T-cell (primary cell): ENCODE measurements at regions of chr7 and their contacts with region 1.

Region 1: GRCh38 chr7:44973610-44974401 is 5.0 kb downstream of the MYO1G start:
- DNase-seq: peak in 34 of 35 experiments; percentile 33 to 72 (median 58)
- ATAC-seq: peak; percentile 22 to 43 (median 30)
- H3K4me3 ChIP-seq: no peak overlapping the region
- H3K4me3 Mint-ChIP-seq: no peak overlapping the region
- H3K27ac ChIP-seq: no peak overlapping the region
- H3K27ac Mint-ChIP-seq: peak overlapping the region; percentile 43 to 96
- H3K4me1 ChIP-seq: peaks cover 12 to 61% of the 10 kb centered on the region in 2 experiments
- H3K4me1 Mint-ChIP-seq: peaks cover 50 to 53% (median 51%) of the 10 kb centered on the region in 3 donors
- H3K27me3 ChIP-seq: no peaks in the 10 kb centered on the region
- H3K27me3 Mint-ChIP-seq: no peaks in the 10 kb centered on the region

Region 2: DNA sequence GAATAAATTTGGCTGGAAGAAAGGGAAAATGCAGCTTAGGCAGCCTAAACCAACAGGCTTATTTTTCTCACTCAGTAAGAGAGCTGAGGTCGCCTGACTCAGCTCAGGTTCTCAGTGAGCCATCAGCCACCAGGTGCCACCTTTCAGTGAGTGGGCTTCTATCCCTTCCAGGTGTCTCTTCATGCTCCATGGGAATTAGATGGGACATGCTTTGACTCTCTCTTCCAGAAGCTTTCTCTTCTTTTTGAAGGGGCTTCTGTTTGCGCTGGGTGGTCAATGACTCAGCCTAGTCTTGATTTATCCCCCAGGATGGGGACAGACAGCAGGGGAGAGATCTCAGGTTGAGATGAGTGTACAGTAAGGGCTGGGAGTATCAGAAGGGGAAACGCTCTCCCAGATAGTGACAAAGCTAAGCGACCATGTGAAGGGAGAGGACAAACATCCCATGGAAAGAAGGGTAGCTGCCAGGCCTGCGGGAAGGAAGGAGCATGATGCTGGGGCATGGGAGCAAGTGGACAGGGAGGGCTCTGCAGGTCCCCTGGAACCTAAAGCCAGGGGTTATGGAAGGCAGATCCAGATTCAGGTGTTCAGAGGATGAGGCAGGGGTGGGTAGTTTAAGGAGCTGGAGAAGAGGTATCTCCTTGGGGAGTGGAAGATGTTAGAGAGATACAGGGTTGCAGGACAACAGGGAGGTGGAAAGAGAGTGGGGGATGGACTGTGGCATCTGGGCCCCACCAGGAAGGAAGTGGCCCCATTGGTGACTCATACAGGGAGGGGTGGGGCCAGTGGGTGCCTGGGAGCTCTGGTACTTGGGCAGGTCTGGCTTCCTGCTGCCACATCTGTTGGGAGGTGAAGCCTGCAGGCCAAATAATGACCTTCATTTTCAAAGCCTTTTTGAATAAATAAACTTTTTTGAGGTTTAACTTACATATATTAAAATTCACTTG is 334.9 kb before region 1 on chr7:
- CTCF ChIA-PET with region 1: no interaction called
- POLR2A ChIA-PET with region 1: interaction called in 1 of 2 experiments, 18 read pairs
- DNase-seq: peak; percentile 56 to 83 (median 70)
- ATAC-seq: peak; percentile 66 to 89 (median 86)
- H3K4me3 ChIP-seq: no peak overlapping the region
- H3K4me3 Mint-ChIP-seq: peak overlapping the region; percentile 66 to 80 (median 69)
- H3K27ac ChIP-seq: peak overlapping the region; percentile 99
- H3K27ac Mint-ChIP-seq: peak overlapping the region; percentile 98 to 100
- H3K4me1 ChIP-seq: peaks cover 26 to 85% of the 10 kb centered on the region in 2 experiments
- H3K4me1 Mint-ChIP-seq: peaks cover 59 to 85% (median 82%) of the 10 kb centered on the region in 3 donors
- H3K27me3 ChIP-seq: no peaks in the 10 kb centered on the region
- H3K27me3 Mint-ChIP-seq: no peaks in the 10 kb centered on the region

Region 3: DNA sequence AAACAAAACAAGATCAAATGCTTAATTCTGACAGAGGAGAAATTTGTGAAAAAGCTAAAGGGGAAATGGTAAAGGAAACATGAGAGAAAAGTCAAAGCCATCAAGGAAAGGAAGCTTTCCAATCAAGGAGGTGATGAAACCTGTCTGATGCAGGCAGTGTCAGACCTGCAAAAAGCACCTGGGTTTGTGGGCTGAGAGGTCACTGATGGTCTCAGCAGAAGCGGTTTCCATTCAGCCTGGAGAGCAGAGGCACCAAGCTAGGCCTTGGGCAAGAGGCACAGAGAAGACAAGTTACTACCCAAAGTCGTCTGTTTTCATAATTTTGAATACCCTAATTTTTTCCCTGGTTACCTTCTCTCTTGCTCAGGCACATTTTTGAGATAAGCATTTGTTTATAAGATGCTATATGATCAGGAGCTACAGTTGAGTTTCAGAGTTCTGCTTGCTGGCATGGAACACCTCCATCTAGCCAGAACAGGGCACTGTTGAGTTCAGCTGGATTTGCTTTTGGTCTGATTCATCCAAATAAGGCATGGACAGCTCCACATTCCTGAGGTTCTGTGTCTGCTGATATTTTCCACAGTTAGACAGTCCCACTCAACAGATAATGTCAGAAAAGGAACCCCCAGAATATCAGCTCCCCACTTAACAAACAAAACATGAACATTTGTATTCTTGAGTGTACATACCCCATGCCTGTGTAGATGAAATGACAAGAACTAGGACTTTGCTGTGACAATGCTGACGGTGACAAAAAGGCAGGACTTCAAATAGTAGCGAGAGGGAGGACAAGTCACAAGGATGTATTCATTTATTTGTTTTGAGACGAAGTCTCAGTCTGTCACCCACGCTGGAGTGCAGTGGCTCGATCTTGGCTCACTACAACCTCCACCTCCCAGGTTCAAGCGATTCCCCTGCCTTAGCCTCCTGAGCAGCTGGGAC is 182.3 kb before region 1 on chr7:
- CTCF ChIA-PET with region 1: no interaction called
- POLR2A ChIA-PET with region 1: no interaction called
- DNase-seq: no peak
- ATAC-seq: no peak
- H3K4me3 ChIP-seq: no peak overlapping the region
- H3K4me3 Mint-ChIP-seq: no peak overlapping the region
- H3K27ac ChIP-seq: no peak overlapping the region
- H3K27ac Mint-ChIP-seq: no peak overlapping the region
- H3K4me1 ChIP-seq: peaks cover 2 to 14% of the 10 kb centered on the region in 2 experiments
- H3K4me1 Mint-ChIP-seq: peaks cover 0 to 5% (median 4%) of the 10 kb centered on the region in 3 donors
- H3K27me3 ChIP-seq: no peaks in the 10 kb centered on the region
- H3K27me3 Mint-ChIP-seq: no peaks in the 10 kb centered on the region

Region 4: DNA sequence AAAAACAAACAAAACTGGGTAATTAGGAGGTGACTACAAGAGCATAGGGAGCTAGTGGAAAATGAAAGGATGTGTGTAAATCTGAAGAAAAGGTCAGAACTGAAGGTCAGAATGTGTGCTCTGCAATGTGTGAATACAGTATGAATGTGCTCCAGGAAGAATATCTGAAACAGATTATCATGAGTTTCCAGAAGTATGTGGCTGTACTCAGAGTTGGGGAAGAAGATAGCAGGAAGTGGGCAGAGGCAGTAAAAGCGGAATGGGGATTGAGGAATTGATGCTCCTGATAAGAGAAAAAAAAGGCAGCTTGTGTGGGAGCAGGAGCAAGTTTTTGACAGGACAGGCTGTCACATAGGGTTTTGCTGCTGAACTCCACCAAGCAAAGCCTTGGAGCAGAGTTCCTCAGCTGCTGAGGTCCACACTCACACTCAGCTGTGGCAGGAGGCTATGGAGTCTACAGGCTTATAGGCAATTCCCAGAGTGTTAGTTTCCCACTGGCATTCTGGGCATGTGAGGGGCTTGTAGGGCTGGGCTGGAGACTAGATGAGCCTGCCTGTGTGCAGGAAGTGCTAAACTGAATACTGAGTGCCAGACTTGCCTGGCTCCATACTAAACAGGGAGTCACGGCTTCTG is 148.8 kb before region 1 on chr7:
- CTCF ChIA-PET with region 1: no interaction called
- POLR2A ChIA-PET with region 1: no interaction called
- DNase-seq: no peak
- ATAC-seq: peak in 1 of 4 experiments; percentile 17
- H3K4me3 ChIP-seq: no peak overlapping the region
- H3K4me3 Mint-ChIP-seq: no peak overlapping the region
- H3K27ac ChIP-seq: peak overlapping the region; percentile 20
- H3K27ac Mint-ChIP-seq: peak overlapping the region; percentile 47 to 53
- H3K4me1 ChIP-seq: no peaks in the 10 kb centered on the region
- H3K4me1 Mint-ChIP-seq: peaks cover 8 to 9% (median 8%) of the 10 kb centered on the region in 3 donors
- H3K27me3 ChIP-seq: no peaks in the 10 kb centered on the region
- H3K27me3 Mint-ChIP-seq: no peaks in the 10 kb centered on the region

Region 5: DNA sequence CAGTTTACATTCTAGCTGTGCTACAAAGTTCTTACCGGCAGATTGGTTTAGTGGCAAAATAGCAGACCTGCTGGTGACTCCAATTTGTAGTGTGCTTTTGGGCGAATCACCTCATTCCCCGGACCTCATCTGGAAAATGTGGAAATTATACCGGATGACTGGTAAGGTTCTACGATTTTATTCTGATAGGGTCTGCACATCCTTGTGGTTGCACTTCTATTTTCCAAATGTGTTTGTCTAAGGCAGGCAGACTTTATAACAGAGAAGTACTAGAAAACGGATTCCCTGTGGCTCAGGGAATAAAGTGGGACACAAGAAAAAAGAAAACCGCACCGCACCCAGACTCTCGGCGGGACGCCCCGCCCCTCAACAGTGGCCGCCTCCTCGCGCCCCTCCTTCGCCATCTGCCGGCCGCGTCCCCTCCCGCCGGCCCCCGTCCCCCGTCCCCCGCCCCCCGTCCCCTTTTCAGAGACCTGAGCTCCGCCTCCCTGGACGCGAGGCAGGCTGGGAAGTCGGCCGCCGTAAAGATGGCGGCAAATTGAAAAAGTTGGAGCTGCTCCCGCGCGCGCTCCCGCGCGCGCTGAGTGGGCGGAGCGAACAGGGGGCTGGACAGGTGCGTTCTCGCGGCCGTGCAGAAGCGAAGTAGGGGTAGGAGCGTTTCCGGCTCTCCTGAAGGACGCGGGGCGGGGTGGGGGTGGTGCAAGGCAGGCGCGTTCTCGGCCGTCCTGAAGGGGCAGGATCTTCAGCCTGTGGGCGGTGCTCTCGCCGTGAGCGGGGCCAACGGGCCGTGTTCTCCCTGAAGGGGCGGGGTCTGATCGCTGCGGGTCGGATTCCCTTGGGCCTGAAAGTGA is 25.7 kb after region 1 on chr7:
- CTCF ChIA-PET with region 1: interaction called, 19 to 36 read pairs
- POLR2A ChIA-PET with region 1: interaction called, 8 to 12 read pairs
- DNase-seq: peak; percentile 96 to 99 (median 98)
- ATAC-seq: peak; percentile 84 to 89 (median 86)
- H3K4me3 ChIP-seq: peak overlapping the region; percentile 60 to 79
- H3K4me3 Mint-ChIP-seq: peak overlapping the region; percentile 85 to 97 (median 95)
- H3K27ac ChIP-seq: peak overlapping the region; percentile 50
- H3K27ac Mint-ChIP-seq: peak overlapping the region; percentile 95 to 99
- H3K4me1 ChIP-seq: peaks cover 20 to 46% of the 10 kb centered on the region in 2 experiments
- H3K4me1 Mint-ChIP-seq: peaks cover 53 to 60% (median 54%) of the 10 kb centered on the region in 3 donors
- H3K27me3 ChIP-seq: no peaks in the 10 kb centered on the region
- H3K27me3 Mint-ChIP-seq: no peaks in the 10 kb centered on the region

Region 6: DNA sequence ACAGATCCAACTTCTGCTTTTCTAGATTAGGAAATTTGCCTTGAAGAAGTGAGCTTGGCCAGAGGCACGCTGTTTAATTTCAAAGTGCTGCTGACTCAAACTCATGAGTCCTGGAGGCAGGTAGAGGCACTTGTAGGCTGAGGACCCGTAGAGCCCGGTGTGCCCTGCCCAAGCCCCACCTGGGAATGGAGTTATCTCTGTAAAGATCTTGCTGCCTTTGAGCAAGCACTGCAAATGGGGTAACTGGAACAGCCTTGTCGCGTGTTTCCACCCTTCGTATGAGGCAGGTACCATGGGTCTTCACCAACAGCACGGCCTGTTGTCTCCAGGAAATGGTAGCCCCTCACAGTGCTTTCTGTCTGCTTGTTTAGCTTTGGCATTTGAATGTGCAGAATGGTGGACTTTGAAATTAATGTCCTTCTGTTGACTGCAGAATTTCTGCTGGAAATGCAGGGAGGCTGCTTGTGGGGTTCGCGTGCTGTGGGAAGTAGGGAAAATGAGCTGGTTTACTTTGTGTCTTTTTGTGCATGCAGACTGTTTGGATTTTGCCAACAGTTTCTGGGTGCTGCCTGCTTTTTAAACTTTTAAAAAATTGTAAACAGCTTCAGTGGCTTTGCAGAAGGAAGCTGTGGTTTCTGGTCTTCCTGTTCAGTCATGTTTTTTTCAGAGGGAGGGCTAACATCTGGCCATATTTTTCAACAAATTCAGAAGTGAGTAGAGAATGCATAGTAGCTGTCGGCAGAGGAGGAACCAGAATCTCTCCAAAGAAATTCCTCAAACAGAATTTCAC is 53.4 kb after region 1 on chr7:
- CTCF ChIA-PET with region 1: interaction called, 7 to 16 read pairs
- POLR2A ChIA-PET with region 1: interaction called, 3 read pairs
- DNase-seq: peak in 29 of 35 experiments; percentile 4 to 67 (median 23)
- ATAC-seq: peak; percentile 69 to 79 (median 76)
- H3K4me3 ChIP-seq: peak overlapping the region; percentile 89 to 96
- H3K4me3 Mint-ChIP-seq: peak overlapping the region; percentile 84 to 91 (median 90)
- H3K27ac ChIP-seq: peak overlapping the region; percentile 71
- H3K27ac Mint-ChIP-seq: peak overlapping the region; percentile 88 to 93
- H3K4me1 ChIP-seq: peaks cover 35 to 57% of the 10 kb centered on the region in 2 experiments
- H3K4me1 Mint-ChIP-seq: peaks cover 60 to 77% (median 67%) of the 10 kb centered on the region in 3 donors
- H3K27me3 ChIP-seq: no peaks in the 10 kb centered on the region
- H3K27me3 Mint-ChIP-seq: no peaks in the 10 kb centered on the region

Region 7: GRCh38 chr7:45035893-45036292 is 62.1 kb after region 1 on chr7:
- CTCF ChIA-PET with region 1: interaction called, 8 to 14 read pairs
- POLR2A ChIA-PET with region 1: interaction called, 3 to 7 read pairs
- DNase-seq: peak in 4 of 35 experiments; percentile 10 to 32 (median 22)
- ATAC-seq: peak; percentile 43 to 73 (median 56)
- H3K4me3 ChIP-seq: peak overlapping the region; percentile 0 to 62
- H3K4me3 Mint-ChIP-seq: peak overlapping the region; percentile 69 to 91 (median 78)
- H3K27ac ChIP-seq: peak overlapping the region; percentile 33
- H3K27ac Mint-ChIP-seq: peak overlapping the region; percentile 73 to 89
- H3K4me1 ChIP-seq: peaks cover 43 to 78% of the 10 kb centered on the region in 2 experiments
- H3K4me1 Mint-ChIP-seq: peaks cover 81 to 85% (median 84%) of the 10 kb centered on the region in 3 donors
- H3K27me3 ChIP-seq: no peaks in the 10 kb centered on the region
- H3K27me3 Mint-ChIP-seq: no peaks in the 10 kb centered on the region

Region 8: DNA sequence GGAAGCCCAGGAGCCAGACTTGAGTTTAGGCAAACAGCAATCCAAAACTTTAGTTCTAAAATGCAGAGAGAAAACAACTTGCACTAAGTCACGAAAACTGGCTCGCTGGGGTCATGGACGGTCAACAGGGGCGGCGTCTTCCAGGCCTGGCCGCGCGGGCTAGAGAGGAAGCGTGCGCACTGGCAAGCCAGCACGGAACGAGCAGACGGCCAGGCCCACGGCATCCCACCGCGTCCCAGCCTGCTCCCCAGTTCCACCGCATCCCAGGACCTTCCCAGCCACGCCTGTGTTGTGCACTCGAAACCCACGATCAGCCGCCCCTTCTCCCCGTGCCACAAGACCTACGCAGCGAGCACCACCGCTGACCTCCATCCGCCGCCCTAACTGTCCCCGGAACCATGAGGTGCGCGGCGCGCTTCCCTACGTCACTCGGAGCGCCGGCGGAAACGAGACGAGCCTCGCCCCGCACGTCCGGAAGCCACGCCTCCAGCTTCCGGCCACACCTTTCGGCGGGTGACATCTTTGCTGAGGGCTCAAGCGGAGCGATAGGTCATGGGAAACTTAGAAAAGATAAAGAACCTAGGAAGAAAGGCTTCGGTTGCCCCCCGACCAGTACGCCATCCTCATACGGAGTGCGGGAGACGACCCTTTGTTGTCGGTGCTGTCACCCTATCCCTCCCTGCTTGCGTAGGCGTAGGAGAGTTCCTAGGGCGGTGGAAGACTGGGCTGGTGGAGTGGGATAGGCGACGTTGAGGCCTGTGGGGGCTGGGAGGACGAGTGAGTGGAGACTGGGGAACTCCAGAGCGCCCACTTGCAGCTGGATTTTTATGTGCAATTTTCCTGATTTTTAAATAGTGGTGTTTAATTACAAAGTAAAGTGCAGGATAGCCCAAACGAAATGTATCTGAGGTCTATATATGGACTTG is 137.8 kb after region 1 on chr7 and contains the start of gene TBRG4:
- CTCF ChIA-PET with region 1: interaction called, 3 to 10 read pairs
- POLR2A ChIA-PET with region 1: interaction called in 1 of 2 experiments, 3 read pairs
- DNase-seq: peak; percentile 86 to 98 (median 93)
- ATAC-seq: peak; percentile 85 to 95 (median 94)
- H3K4me3 ChIP-seq: peak within 1 kb of the TSS; percentile 71 to 85
- H3K4me3 Mint-ChIP-seq: peak within 1 kb of the TSS; percentile 88 to 94 (median 93)
- H3K27ac ChIP-seq: peak within 1 kb of the TSS; percentile 91
- H3K27ac Mint-ChIP-seq: peak within 1 kb of the TSS; percentile 96 to 97
- H3K4me1 ChIP-seq: peaks cover 30 to 53% of the 10 kb centered on the region in 2 experiments
- H3K4me1 Mint-ChIP-seq: peaks cover 46 to 51% (median 51%) of the 10 kb centered on the region in 3 donors
- H3K27me3 ChIP-seq: no peaks in the 10 kb centered on the region
- H3K27me3 Mint-ChIP-seq: peaks cover 4 to 5% of the 10 kb centered on the region in 2 donors
- total RNA-seq, gene TBRG4: 94.3 to 142 (median 122) TPM

Region 9: DNA sequence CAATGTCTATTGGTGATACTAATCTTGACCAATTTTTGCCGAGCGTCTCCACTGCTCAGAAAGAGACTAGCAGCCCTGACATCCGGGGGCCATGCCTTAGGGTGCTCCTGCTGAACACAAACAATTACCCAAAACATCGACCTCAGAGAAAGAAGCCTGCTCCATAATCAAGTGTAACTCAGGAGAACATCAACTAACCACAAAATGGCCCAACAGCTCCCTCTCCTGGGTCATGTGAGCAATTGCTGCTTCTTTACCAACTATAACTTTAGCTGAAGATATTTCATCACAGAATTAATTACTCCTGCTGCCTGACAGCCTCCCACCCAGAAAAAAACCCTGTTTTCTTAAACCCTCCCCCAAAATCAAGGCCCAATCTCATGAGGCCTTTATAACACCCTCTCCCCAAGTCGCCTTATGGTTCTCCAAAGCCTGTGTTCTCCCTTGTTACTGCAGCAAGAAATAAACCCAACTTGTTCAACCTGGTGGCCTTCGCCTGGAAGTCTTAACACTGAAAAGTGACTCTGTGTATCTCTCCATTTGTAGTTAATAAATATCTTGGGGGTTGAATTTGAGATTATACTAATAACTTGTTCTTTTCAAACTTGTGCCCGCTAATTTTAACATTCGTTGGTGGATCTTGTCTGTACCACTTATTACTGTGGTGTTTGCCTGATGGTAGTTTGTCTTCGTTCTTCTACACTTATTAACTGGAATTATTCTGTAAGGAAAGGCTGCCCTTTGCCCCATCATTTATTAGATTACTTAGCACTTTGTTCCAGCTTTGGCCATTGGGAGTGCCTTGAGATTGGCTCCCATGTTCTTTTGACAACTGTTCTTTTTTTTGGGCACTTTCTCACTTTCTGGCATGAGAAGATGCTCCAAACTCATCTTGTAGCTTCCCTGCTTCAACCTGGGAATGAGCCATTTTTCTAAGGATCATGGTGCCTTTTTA is 162.6 kb after region 1 on chr7:
- CTCF ChIA-PET with region 1: interaction called, 70 to 72 read pairs
- POLR2A ChIA-PET with region 1: interaction called in 1 of 2 experiments, 6 read pairs
- DNase-seq: peak; percentile 30 to 92 (median 59)
- ATAC-seq: peak; percentile 80 to 90 (median 84)
- H3K4me3 ChIP-seq: no peak overlapping the region
- H3K4me3 Mint-ChIP-seq: no peak overlapping the region
- H3K27ac ChIP-seq: no peak overlapping the region
- H3K27ac Mint-ChIP-seq: peak overlapping the region in 1 of 2 donors; percentile 16
- H3K4me1 ChIP-seq: peaks cover 0 to 9% of the 10 kb centered on the region in 2 experiments
- H3K4me1 Mint-ChIP-seq: peaks cover 5 to 9% (median 7%) of the 10 kb centered on the region in 3 donors
- H3K27me3 ChIP-seq: peaks cover 0 to 4% of the 10 kb centered on the region in 2 experiments
- H3K27me3 Mint-ChIP-seq: peaks cover 0 to 4% of the 10 kb centered on the region in 2 donors